ENCODE measurements at regions of chr10 and their contacts with region 1.

Region 1: GRCh38 chr10:17290226-17290625 is 62.2 kb downstream of the VIM start:
- DNase-seq: peak; percentile 67 to 79 (median 76)
- H3K4me3 ChIP-seq: no peak overlapping the region
- H3K27ac ChIP-seq: no peak overlapping the region
- H3K4me1 ChIP-seq: peaks cover 0 to 4% (median 0%) of the 10 kb centered on the region in 4 experiments
- H3K27me3 ChIP-seq: no peaks in the 10 kb centered on the region

Region 2: GRCh38 chr10:16828114-16828568 is 462.1 kb before region 1 on chr10:
- CTCF ChIA-PET with region 1: interaction called, 10 read pairs
- POLR2A ChIA-PET with region 1: no interaction called
- DNase-seq: peak; percentile 80 to 88 (median 85)
- H3K4me3 ChIP-seq: no peak overlapping the region
- H3K27ac ChIP-seq: no peak overlapping the region
- H3K4me1 ChIP-seq: peaks cover 0 to 27% (median 10%) of the 10 kb centered on the region in 4 experiments
- H3K27me3 ChIP-seq: peaks cover 0 to 2% (median 0%) of the 10 kb centered on the region in 5 experiments

Region 3: GRCh38 chr10:17273403-17273802 is 16.8 kb before region 1 on chr10:
- CTCF ChIA-PET with region 1: interaction called, 10 read pairs
- POLR2A ChIA-PET with region 1: no interaction called
- DNase-seq: peak in 2 of 3 donors; percentile 25 to 35
- H3K4me3 ChIP-seq: no peak overlapping the region
- H3K27ac ChIP-seq: no peak overlapping the region
- H3K4me1 ChIP-seq: no peaks in the 10 kb centered on the region
- H3K27me3 ChIP-seq: no peaks in the 10 kb centered on the region

Region 4: DNA sequence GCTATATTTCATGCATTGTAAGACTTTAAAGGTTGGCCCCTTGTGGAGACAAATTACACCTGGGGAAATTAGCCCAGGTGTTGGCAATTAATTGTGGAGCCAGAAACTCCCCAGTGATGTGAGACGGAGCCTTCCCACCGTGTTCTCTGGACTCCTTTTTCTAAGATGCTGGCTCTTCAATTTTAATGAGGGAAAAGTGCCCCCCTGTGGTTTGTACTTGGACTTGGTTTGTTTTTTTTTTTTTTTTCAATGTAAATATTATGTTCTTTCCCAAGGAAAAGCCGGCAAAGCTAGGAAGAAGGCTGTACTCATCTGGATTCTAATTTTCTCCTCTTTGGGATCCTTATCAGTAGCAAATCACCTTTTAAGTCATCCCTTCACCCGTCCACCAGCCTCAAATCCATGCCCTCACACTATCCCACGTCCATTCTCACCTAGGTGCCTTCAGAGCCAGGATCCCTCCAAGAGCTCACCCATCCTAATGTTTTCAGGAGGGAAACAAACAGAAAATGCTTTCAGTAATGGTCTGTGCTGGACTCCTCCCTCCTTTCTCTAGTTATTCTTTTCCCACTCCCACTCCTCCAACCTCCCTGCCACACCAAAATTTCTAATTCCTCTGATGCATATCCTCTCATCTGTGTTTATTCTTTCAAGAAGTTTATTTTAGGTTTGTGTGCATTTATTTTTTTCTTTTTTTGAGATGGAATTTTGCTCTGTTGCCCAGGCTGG is 184.5 kb after region 1 on chr10:
- CTCF ChIA-PET with region 1: interaction called, 15 read pairs
- POLR2A ChIA-PET with region 1: no interaction called
- DNase-seq: peak; percentile 54 to 59 (median 55)
- H3K4me3 ChIP-seq: peak overlapping the region in 3 of 7 experiments; percentile 6 to 25 (median 9)
- H3K27ac ChIP-seq: no peak overlapping the region
- H3K4me1 ChIP-seq: peaks cover 2 to 27% (median 16%) of the 10 kb centered on the region in 4 experiments
- H3K27me3 ChIP-seq: no peaks in the 10 kb centered on the region

Region 5: GRCh38 chr10:17599089-17599488 is 308.9 kb after region 1 on chr10:
- CTCF ChIA-PET with region 1: interaction called, 18 read pairs
- POLR2A ChIA-PET with region 1: no interaction called
- DNase-seq: peak; percentile 68 to 81 (median 78)
- H3K4me3 ChIP-seq: peak overlapping the region in 1 of 7 experiments; percentile 39
- H3K27ac ChIP-seq: no peak overlapping the region
- H3K4me1 ChIP-seq: peaks cover 0 to 10% (median 0%) of the 10 kb centered on the region in 4 experiments
- H3K27me3 ChIP-seq: no peaks in the 10 kb centered on the region

Measured in common myeloid progenitor, CD34-positive (primary cell).